GM13976 (cell line): ENCODE measurements at regions of chr5 and their contacts with region 1.

Region 1: DNA sequence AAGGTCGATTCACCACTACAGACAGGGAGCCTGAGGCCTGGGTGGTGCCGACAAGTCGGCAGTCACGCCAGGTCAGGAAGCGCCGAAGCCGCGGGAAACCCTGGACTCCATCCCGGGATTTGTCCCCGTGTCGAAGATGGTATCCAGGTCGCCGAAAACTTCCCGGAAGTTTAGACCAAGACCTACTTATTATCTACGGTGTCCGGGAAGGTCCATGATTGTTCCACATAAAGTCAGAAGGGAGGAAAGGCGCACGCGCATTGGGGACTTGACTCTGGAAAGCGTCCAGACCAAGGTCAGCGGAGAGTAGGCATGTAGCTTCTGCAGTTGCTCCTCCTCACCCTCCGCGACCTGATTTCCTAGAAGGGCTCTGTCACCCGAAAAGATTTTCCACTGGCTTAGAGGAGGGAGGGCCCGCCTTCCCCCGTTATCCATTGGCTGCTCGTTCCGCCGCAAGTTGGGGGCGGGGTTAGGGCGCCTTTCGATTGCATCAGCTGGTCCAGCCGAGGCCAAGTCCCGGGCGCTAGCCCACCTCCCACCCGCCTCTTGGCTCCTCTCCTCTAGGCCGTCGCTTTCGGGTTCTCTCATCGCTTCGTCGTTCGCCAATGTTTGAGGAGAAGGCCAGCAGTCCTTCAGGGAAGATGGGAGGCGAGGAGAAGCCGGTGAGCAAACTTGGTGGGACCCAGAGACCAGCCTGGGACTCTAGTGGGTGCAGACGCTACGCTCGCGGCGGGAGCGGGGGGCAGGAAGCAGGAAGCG is at the start of gene TARS1:
- DNase-seq: peak; percentile 96
- CTCF ChIP-seq: no peak

Region 2: GRCh38 chr5:33969572-33970452 is 529.2 kb after region 1 on chr5:
- in situ Hi-C with region 1: loop called (anchors 10 kb)
- DNase-seq: peak; percentile 72
- CTCF ChIP-seq: peak; percentile 75

Region 3: GRCh38 chr5:34474573-34475021 is 1033.9 kb after region 1 on chr5:
- in situ Hi-C with region 1: loop called (anchors 25 kb)
- DNase-seq: peak; percentile 58
- CTCF ChIP-seq: peak; percentile 79